CD14-positive monocyte (primary cell): ENCODE measurements at regions of chr4 and their contacts with region 1.

Region 1: GRCh38 chr4:110631584-110632505 is 9.0 kb upstream of the PITX2 start:
- DNase-seq: peak; percentile 3 to 46 (median 22)
- H3K4me3 ChIP-seq: peak overlapping the region in 1 of 3 experiments; percentile 46
- H3K4me3 Mint-ChIP-seq: peak overlapping the region; percentile 61 to 94
- H3K27ac ChIP-seq: no peak overlapping the region
- H3K27ac Mint-ChIP-seq: peak overlapping the region in 1 of 7 donors; percentile 44
- H3K4me1 ChIP-seq: peaks cover 10% of the 10 kb centered on the region in 2 donors
- H3K4me1 Mint-ChIP-seq: peaks cover 13% of the 10 kb centered on the region
- H3K27me3 ChIP-seq: peaks cover 94 to 100% of the 10 kb centered on the region in 2 donors
- H3K27me3 Mint-ChIP-seq: peaks cover 95 to 99% (median 96%) of the 10 kb centered on the region in 3 donors
- CTCF ChIP-seq: peak; percentile 45

Region 2: GRCh38 chr4:110597582-110597981 is 34.3 kb before region 1 on chr4:
- intact Hi-C with region 1: no loop called
- DNase-seq: no peak
- H3K4me3 ChIP-seq: no peak overlapping the region
- H3K4me3 Mint-ChIP-seq: no peak overlapping the region
- H3K27ac ChIP-seq: no peak overlapping the region
- H3K27ac Mint-ChIP-seq: no peak overlapping the region
- H3K4me1 ChIP-seq: no peaks in the 10 kb centered on the region
- H3K4me1 Mint-ChIP-seq: no peaks in the 10 kb centered on the region
- H3K27me3 ChIP-seq: peaks cover under 1 to 2% of the 10 kb centered on the region in 2 donors
- H3K27me3 Mint-ChIP-seq: peaks cover 10 to 14% (median 13%) of the 10 kb centered on the region in 3 donors
- CTCF ChIP-seq: no peak

Region 3: GRCh38 chr4:111283061-111283677 is 651.3 kb after region 1 on chr4:
- intact Hi-C with region 1: loop called in 1 of 2 experiments (anchors 5 kb)
- DNase-seq: peak; percentile 0 to 15 (median 10)
- H3K4me3 ChIP-seq: no peak overlapping the region
- H3K4me3 Mint-ChIP-seq: peak overlapping the region in 1 of 2 donors; percentile 44
- H3K27ac ChIP-seq: no peak overlapping the region
- H3K27ac Mint-ChIP-seq: no peak overlapping the region
- H3K4me1 ChIP-seq: no peaks in the 10 kb centered on the region
- H3K4me1 Mint-ChIP-seq: no peaks in the 10 kb centered on the region
- H3K27me3 ChIP-seq: peaks cover 2 to 3% of the 10 kb centered on the region in 2 donors
- H3K27me3 Mint-ChIP-seq: peaks cover 4 to 7% (median 4%) of the 10 kb centered on the region in 3 donors
- CTCF ChIP-seq: peak; percentile 90